ENCODE measurements at regions of chr2 and their contacts with region 1.

Region 1: DNA sequence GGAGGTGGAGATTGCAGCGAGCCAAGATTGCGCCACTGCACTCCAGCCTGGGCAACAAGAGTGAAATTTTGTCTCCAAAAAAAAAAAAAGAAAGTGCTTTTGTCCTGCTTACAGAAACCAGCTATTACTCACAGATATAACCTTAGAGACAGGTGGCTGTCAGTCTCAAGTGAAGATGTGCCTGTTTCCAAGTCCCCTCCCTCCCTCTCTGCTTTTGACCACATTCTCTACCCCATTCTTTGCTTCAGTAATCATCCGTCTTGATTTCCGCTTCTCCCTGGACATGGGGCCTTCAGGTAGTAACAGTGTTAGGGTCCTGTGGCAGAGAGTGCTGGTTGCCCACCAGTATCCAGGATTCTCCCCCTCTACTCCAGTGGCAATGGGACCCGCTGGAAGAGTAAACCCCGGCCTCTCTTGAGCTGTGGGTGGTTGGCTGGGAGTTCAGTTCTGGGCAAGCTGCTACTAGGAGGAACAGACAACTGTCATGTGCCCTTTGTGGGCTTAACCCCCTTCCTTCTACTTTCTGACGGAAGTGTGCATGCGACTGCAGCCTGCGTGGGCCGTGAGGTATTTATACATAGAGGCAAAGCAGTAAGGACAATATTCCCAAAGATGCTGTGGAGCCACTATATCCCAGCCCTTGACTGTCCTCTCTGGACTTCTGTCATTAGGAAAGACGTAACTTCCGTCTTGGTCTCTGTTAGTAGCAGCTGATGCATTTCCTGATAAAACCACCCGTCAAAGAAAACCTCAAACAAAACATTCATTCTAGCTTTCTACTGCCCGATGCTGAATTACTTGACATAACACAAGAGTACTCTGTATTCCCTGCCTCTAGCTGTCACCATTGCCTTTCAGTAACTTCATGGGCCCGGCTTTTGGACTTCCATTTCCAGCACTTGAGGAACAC is 17.8 kb downstream of the PDCL3 start:
- DNase-seq: peak; percentile 37 to 91 (median 65)
- ATAC-seq: peak; percentile 77
- H3K4me3 ChIP-seq: peak overlapping the region; percentile 27 to 34
- H3K4me3 Mint-ChIP-seq: peak overlapping the region; percentile 68
- H3K27ac ChIP-seq: peak overlapping the region; percentile 75 to 87
- H3K27ac Mint-ChIP-seq: peak overlapping the region; percentile 99
- H3K4me1 ChIP-seq: peaks cover 35% of the 10 kb centered on the region
- H3K4me1 Mint-ChIP-seq: peaks cover 39% of the 10 kb centered on the region
- H3K27me3 ChIP-seq: no peaks in the 10 kb centered on the region
- H3K27me3 Mint-ChIP-seq: no peaks in the 10 kb centered on the region
- CTCF ChIP-seq: no peak

Region 2: DNA sequence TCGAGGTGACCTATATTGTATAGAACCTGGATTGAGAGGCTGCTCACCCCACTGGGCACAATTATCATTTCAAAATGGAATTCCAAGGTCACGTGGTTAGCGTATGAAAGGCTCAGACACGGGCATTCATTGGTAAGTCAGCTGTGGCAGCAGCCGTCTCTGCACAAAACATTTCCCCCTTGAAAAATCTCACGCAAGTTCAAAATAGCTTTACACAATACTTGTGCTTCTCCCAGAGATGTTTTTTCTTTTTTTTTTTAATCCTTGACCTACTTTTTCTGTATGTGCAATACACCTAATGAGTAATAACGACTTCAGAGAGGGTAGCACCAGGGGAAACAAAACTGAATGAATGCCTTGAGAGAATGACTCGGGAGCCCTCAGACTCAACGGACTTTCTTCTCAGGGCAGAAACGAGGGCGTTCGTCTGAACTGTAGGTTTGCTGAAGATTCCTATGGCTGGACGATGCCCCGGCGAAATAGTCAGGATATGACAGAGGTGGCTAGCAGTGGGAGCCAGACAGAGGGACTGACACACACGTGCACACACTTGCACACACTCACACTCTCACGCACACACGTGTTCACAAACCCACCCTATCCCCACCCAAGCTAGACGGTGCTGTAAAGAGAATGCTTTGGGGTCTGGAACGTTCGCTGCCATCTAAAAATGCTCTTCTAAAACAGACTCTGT is 60.0 kb after region 1 on chr2:
- CTCF ChIA-PET with region 1: no interaction called
- POLR2A ChIA-PET with region 1: interaction called, 5 read pairs
- intact Hi-C with region 1: loop called (anchors 5 kb)
- DNase-seq: peak in 1 of 9 experiments; percentile 39
- ATAC-seq: no peak
- H3K4me3 ChIP-seq: no peak overlapping the region
- H3K4me3 Mint-ChIP-seq: no peak overlapping the region
- H3K27ac ChIP-seq: no peak overlapping the region
- H3K27ac Mint-ChIP-seq: peak overlapping the region; percentile 42
- H3K4me1 ChIP-seq: peaks cover 35% of the 10 kb centered on the region
- H3K4me1 Mint-ChIP-seq: peaks cover 51% of the 10 kb centered on the region
- H3K27me3 ChIP-seq: no peaks in the 10 kb centered on the region
- H3K27me3 Mint-ChIP-seq: no peaks in the 10 kb centered on the region
- CTCF ChIP-seq: no peak

Region 3: DNA sequence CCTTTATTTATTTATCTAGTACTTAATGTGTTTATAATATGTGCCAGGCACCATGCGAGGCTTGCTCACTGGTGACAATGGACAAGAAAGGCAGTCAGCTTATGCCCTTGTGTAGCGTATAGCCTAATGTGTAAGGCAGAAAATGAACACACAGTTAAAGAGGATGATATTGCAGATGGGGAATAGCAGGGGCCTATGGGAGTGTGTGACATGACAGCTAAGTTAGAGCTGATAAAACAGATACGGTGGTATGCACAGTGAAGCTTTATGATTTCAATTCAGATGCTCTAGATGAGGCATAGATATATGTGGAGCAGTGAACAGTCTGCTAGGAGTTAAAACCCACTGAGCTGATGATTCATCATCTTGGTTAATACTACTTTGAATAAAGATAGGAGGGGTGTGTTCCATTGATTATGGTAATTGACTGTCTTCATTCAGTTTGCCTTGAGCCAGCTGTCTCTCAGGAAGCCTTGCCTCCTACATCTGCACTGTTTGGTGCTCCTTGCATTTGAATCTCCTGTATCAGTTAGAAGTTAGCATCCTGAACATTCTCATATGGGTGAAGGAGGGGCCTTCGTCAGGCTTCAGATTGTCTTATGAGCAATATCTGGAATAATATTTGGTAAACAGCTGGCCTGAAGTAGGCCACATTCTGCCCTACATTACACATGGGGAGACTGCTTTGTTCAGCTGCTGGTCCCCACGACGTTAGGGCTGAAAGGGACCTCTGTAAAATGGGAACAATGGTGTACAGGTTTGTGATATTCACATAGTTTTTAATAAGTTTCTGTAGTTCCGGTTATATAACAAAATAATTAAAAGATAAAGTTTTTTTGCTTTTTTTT is 1130.1 kb after region 1 on chr2:
- CTCF ChIA-PET with region 1: no interaction called
- POLR2A ChIA-PET with region 1: no interaction called
- intact Hi-C with region 1: loop called in 1 of 2 experiments (anchors 10 kb)
- DNase-seq: peak in 3 of 9 experiments; percentile 25 to 44 (median 42)
- ATAC-seq: peak; percentile 76
- H3K4me3 ChIP-seq: no peak overlapping the region
- H3K4me3 Mint-ChIP-seq: peak overlapping the region; percentile 42
- H3K27ac ChIP-seq: peak overlapping the region in 1 of 2 experiments; percentile 38
- H3K27ac Mint-ChIP-seq: peak overlapping the region; percentile 75
- H3K4me1 ChIP-seq: peaks cover 91% of the 10 kb centered on the region
- H3K4me1 Mint-ChIP-seq: peaks cover 74% of the 10 kb centered on the region
- H3K27me3 ChIP-seq: no peaks in the 10 kb centered on the region
- H3K27me3 Mint-ChIP-seq: no peaks in the 10 kb centered on the region
- CTCF ChIP-seq: no peak